ENCODE measurements at regions of chr18 and their contacts with region 1.

Region 1: DNA sequence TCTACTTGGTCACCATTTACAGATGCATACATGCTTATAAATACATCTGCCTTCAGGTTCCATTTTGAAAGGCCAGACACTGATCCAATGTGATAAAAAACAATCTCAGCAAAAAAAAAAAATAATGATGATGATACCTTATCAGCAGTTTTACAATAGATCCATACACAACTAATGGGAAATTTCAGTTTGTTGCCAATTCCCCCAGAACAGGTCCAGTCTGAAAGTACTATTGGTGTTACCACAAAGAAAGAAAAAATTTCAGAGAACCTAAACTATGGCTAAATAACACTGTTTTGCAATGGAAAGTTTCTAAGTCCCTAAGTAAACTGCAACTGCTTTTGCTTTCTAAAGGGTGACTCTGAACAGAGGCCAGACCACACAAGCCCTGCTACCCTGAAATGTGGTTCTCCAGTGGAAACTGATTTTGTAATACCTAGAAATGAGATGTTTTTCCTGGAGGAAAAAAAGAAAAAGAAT is 54.1 kb downstream of the LPIN2 start:
- DNase-seq: peak; percentile 65
- H3K4me3 Mint-ChIP-seq: peak overlapping the region; percentile 69
- H3K27ac Mint-ChIP-seq: peak overlapping the region; percentile 97
- H3K4me1 Mint-ChIP-seq: peaks cover 91% of the 10 kb centered on the region
- H3K27me3 Mint-ChIP-seq: no peaks in the 10 kb centered on the region

Region 2: DNA sequence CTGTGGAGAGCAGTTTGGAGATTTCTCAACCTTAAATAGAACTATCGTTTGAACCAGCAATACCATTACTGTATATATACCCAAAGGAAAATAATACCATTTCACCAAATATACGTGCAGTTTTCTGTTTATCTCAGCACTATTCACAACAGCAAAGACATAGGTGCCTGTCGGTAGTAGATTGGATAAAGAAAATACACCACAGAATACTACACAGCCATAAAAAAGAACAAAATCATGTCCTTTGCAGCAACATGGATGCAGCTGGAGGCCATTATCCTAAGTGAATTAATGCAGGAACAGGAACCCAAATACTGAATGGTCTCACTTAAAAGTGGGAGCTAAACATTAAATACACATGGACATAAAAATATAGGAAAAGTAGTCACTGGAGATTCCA is 222.0 kb before region 1 on chr18:
- CTCF ChIA-PET with region 1: no interaction called
- POLR2A ChIA-PET with region 1: no interaction called
- DNase-seq: no peak
- H3K4me3 Mint-ChIP-seq: no peak overlapping the region
- H3K27ac Mint-ChIP-seq: no peak overlapping the region
- H3K4me1 Mint-ChIP-seq: peaks cover 6% of the 10 kb centered on the region
- H3K27me3 Mint-ChIP-seq: no peaks in the 10 kb centered on the region

Region 3: GRCh38 chr18:2971741-2972552 is 13.1 kb after region 1 on chr18:
- CTCF ChIA-PET with region 1: interaction called, 21 read pairs
- POLR2A ChIA-PET with region 1: interaction called, 3 read pairs
- DNase-seq: peak; percentile 75
- H3K4me3 Mint-ChIP-seq: peak overlapping the region; percentile 76
- H3K27ac Mint-ChIP-seq: peak overlapping the region; percentile 97
- H3K4me1 Mint-ChIP-seq: peaks cover 91% of the 10 kb centered on the region
- H3K27me3 Mint-ChIP-seq: no peaks in the 10 kb centered on the region

Region 4: GRCh38 chr18:2978646-2979045 is 19.8 kb after region 1 on chr18:
- CTCF ChIA-PET with region 1: interaction called, 21 read pairs
- POLR2A ChIA-PET with region 1: interaction called, 7 read pairs
- DNase-seq: no peak
- H3K4me3 Mint-ChIP-seq: peak overlapping the region; percentile 82
- H3K27ac Mint-ChIP-seq: peak overlapping the region; percentile 89
- H3K4me1 Mint-ChIP-seq: peaks cover 72% of the 10 kb centered on the region
- H3K27me3 Mint-ChIP-seq: no peaks in the 10 kb centered on the region

Measured in activated CD4-positive, alpha-beta T cell treated with anti-CD3 and anti-CD28 coated beads, Interleukin-2, amount 10 ng/mL, durations not matched to agents 7 days and 5 days (primary cell).